Breast epithelium (tissue), 4 donors: ENCODE measurements at regions of chr1 and their contacts with region 1.

Region 1: DNA sequence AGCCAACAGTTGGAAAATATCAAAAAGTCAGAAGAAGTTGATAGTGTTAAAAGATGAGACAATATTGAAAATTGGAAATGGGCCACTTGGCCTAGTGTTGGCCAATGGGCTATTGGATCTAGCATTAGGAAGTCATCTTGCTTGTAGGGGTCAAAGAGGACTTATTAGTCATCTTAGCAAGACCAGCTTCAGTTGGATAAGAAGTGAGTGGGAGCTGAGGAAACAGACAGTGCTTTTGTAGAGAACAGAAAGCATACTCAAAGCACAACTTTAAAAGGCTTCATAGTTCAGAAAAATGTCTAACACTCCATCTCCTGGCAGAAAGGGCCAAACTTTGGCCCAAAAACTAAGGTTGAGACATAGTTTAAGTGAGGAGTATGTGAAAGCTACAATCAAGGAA is 139.9 kb upstream of the PKN2 start:
- DNase-seq: no peak
- H3K4me3 ChIP-seq: no peak overlapping the region
- H3K27ac ChIP-seq: no peak overlapping the region
- H3K4me1 ChIP-seq: no peaks in the 10 kb centered on the region
- H3K27me3 ChIP-seq: no peaks in the 10 kb centered on the region
- CTCF ChIP-seq: no peak
- POLR2A ChIP-seq: no peak

Region 2: DNA sequence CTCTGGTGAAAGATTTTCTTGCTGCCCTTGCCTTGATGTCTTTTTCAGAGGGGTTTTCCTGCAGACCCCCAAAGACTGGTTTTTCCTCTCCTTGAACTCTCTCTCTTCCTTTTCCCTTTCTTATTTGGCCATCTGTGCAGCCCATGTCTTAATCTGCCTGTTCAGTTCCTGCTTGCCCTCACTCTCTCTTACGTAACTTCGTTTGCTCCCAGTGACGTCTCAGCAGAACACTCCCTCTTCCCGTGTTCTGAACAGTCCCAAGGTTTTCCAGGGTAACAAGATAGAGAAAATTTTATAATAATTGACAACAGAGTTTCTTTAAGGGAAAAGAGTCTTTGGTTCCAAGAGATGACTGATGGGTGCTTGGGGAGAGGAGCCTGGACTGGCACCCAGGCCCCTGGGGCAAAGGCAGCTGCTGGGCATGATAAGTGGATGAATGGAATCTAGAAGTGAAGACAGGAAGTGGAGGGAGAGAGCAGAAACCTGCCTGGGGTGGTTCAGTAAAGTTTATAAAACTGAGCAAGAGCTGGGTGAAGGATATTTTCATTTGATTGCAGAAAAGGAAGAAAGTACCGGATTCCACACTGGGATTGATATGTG is 1324.5 kb before region 1 on chr1:
- intact Hi-C with region 1: loop called (anchors 5 kb)
- DNase-seq: no peak
- H3K4me3 ChIP-seq: no peak overlapping the region
- H3K27ac ChIP-seq: no peak overlapping the region
- H3K4me1 ChIP-seq: no peaks in the 10 kb centered on the region
- H3K27me3 ChIP-seq: no peaks in the 10 kb centered on the region
- CTCF ChIP-seq: no peak
- POLR2A ChIP-seq: no peak